Heart left ventricle (tissue), 16 donors: ENCODE measurements at regions of chr15 and their contacts with region 1.

Region 1: GRCh38 chr15:63752075-63752684 is 81.6 kb downstream of the HERC1 start:
- DNase-seq: peak in 2 of 5 donors; percentile 25 to 36
- ATAC-seq: peak in 3 of 4 donors; percentile 78 to 90 (median 85)
- H3K4me3 ChIP-seq: no peak overlapping the region
- H3K27ac ChIP-seq: no peak overlapping the region
- H3K4me1 ChIP-seq: peaks cover 0 to 3% (median 0%) of the 10 kb centered on the region in 12 donors
- H3K27me3 ChIP-seq: no peaks in the 10 kb centered on the region
- CTCF ChIP-seq: peak; percentile 45 to 84 (median 74)
- POLR2A ChIP-seq: no peak

Region 2: DNA sequence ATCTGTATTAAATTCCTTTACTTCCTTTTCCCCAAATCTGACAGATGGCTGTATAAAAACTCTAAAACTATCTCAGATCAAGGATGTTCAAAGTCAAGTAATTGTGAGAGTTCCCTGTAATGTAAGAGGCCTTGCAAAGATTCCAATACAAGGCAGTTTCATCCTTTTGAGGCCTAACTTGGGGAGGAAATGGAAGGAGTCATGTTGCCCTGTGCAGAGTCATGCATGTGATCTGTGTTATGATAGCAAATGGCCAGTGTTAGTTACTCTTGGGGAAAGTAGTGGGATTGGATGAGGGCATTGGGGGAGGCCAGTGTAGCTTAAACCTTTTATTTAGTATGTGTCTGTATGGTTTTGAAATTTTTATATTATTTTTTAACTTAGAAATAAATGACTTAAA is 178.6 kb before region 1 on chr15:
- intact Hi-C with region 1: no loop called
- DNase-seq: no peak
- ATAC-seq: no peak
- H3K4me3 ChIP-seq: no peak overlapping the region
- H3K27ac ChIP-seq: no peak overlapping the region
- H3K4me1 ChIP-seq: peaks cover 0 to 8% (median 0%) of the 10 kb centered on the region in 12 donors
- H3K27me3 ChIP-seq: no peaks in the 10 kb centered on the region
- CTCF ChIP-seq: no peak
- POLR2A ChIP-seq: no peak

Region 3: GRCh38 chr15:63833021-63833696 is 81.0 kb after region 1 on chr15:
- intact Hi-C with region 1: loop called in 4 of 10 experiments (anchors 5 to 10 kb)
- DNase-seq: peak in 4 of 5 donors; percentile 32 to 76 (median 42)
- ATAC-seq: peak in 3 of 4 donors; percentile 28 to 75 (median 71)
- H3K4me3 ChIP-seq: peak overlapping the region; percentile 48 to 95 (median 84)
- H3K27ac ChIP-seq: peak overlapping the region; percentile 88 to 98 (median 93)
- H3K4me1 ChIP-seq: peaks cover 0 to 50% (median 34%) of the 10 kb centered on the region in 12 donors
- H3K27me3 ChIP-seq: no peaks in the 10 kb centered on the region
- CTCF ChIP-seq: no peak
- POLR2A ChIP-seq: no peak

Region 4: DNA sequence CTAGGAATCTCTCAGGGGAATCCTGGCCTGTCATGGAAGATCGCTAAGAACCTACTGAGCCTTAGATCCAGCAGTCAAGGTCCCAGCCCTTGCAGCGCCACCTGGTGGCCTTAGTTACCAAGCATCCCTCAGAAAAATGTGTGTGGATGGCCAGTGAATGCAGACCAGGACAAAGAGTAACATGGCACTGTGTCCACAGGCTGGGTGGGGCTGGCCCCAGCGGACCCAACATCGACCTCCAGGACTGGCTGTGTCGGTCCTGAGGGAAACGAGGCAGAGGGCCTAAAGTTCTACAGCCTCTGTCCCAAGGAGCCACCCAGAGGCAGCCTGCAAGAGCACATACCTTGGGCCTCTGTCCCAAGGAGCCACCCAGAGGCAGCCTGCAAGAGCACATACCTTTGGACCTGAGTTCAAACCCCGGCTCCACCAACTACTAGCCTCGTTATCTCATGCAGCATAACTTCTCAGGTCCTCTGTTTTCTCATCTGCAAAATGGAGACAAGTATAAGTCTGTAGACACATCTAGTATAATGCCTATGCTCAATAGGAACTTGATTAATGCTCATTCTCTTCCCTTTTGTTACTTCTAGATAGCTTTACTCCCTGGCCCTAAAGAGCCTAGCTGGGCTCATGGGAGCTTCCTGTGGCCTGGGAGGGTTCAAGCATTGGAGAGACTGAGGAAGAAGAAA is 139.0 kb after region 1 on chr15:
- intact Hi-C with region 1: loop called (anchors 1 to 5 kb)
- DNase-seq: peak; percentile 73 to 88 (median 80)
- ATAC-seq: peak; percentile 24 to 86 (median 80)
- H3K4me3 ChIP-seq: no peak overlapping the region
- H3K27ac ChIP-seq: peak overlapping the region in 1 of 12 donors; percentile 63
- H3K4me1 ChIP-seq: peaks cover 0 to 72% (median 5%) of the 10 kb centered on the region in 12 donors
- H3K27me3 ChIP-seq: no peaks in the 10 kb centered on the region
- CTCF ChIP-seq: peak; percentile 80 to 94 (median 87)
- POLR2A ChIP-seq: no peak

Region 5: DNA sequence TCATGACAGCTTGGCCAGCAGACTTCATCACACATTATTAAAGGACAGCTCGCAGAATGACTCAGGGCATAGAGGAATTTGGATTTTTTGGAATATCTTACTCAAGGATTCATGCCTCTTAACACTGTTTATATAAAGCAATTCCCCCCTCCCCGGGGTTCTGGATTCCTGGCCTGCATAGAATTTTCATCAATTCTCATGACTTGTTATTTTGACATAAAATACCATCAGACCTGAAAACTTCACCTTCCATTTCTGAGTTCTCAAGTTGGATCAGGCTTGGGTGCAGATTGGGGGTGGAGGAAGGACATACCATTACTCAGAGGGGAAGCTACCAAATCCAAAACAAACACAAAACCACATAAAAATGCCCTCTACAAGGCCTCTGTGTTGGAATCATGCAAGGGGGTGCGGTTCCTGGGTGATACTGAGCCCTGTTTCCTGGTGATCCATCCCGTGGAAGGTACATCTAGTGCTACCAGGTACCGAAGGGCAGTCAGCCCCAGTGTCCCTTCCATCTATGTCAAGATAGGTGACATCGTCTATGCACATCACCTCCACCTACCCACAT is 198.8 kb after region 1 on chr15:
- intact Hi-C with region 1: loop called in 1 of 10 experiments (anchors 5 kb)
- DNase-seq: no peak
- ATAC-seq: no peak
- H3K4me3 ChIP-seq: no peak overlapping the region
- H3K27ac ChIP-seq: no peak overlapping the region
- H3K4me1 ChIP-seq: peaks cover 0 to 20% (median 0%) of the 10 kb centered on the region in 12 donors
- H3K27me3 ChIP-seq: no peaks in the 10 kb centered on the region
- CTCF ChIP-seq: no peak
- POLR2A ChIP-seq: no peak

Region 6: DNA sequence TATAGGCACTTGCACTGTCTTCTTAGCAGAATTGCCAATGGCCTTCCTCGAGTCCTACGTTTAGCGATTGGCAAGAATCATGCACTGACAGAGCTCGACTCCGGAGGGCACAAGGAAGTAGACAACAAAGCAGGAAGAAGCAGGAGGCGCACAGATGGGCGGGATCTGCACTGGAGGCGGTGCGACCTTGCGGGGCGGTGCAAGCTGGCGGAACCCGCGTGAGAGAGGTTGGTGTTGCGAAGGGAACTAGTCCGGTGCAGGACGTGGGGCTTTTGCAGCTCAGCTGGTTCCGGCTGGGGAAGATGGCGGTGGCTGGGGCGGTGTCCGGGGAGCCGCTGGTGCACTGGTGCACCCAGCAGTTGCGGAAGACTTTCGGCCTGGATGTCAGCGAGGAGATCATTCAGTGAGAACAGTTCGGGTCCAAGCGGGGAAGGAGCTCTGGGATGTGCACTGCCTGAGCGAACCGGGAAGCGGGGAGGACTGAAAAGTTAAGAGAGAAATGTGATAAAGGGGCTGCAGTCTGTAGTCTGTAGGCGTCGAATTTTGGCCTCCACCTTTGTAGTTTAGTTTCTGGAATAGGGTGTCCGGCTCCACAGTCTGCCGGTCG is 635.5 kb after region 1 on chr15 and contains the start of gene TRIP4:
- intact Hi-C with region 1: no loop called
- DNase-seq: peak; percentile 95 to 97 (median 97)
- ATAC-seq: peak; percentile 99 to 100 (median 100)
- H3K4me3 ChIP-seq: peak within 1 kb of the TSS; percentile 33 to 92 (median 76)
- H3K27ac ChIP-seq: peak within 1 kb of the TSS in 11 of 12 donors; percentile 41 to 92 (median 80)
- H3K4me1 ChIP-seq: peaks cover 0 to 19% (median 9%) of the 10 kb centered on the region in 12 donors
- H3K27me3 ChIP-seq: no peaks in the 10 kb centered on the region
- CTCF ChIP-seq: peak in 3 of 12 donors; percentile 20 to 37 (median 27)
- POLR2A ChIP-seq: peak in 1 of 2 donors; percentile 68
- total RNA-seq, gene TRIP4: 5.9 to 22.7 (median 15.1) TPM